ENCODE measurements at regions of chr9 and their contacts with region 1.

Region 1: DNA sequence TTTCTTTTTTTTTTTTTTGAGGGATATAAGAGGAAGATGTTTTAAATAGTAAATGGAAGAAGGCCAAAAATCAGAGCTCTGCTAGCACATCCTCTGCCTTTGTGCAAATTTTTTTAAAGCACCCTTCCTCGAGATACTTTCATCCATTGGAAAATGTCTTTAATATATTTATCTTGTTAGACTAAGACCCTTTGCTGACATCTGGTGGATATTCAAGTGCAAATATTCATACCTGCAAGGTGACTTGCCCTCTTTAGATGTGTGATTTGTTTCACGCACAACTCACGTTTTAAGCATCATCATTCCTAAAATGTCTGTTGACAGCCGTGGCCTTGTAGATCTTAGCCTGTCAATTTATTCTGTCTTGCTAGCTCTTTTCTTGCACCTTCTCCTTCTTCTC is 258.5 kb downstream of the AGTPBP1 start:
- ATAC-seq: no peak
- H3K4me3 ChIP-seq: no peak overlapping the region
- H3K27ac ChIP-seq: no peak overlapping the region
- H3K4me1 ChIP-seq: no peaks in the 10 kb centered on the region

Region 2: GRCh38 chr9:85108229-85108628 is 375.0 kb before region 1 on chr9:
- in situ Hi-C with region 1: no loop called
- ATAC-seq: no peak
- H3K4me3 ChIP-seq: no peak overlapping the region
- H3K27ac ChIP-seq: no peak overlapping the region
- H3K4me1 ChIP-seq: peaks cover 0 to 3% of the 10 kb centered on the region in 2 donors

Region 3: GRCh38 chr9:85377731-85378289 is 105.4 kb before region 1 on chr9:
- in situ Hi-C with region 1: loop called in 1 of 9 experiments (anchors 25 kb)
- ATAC-seq: peak in 5 of 8 experiments; percentile 14 to 75 (median 28)
- H3K4me3 ChIP-seq: no peak overlapping the region
- H3K27ac ChIP-seq: no peak overlapping the region
- H3K4me1 ChIP-seq: peaks cover 0 to 5% of the 10 kb centered on the region in 2 donors

Measured in motor neuron (in vitro differentiated cells).